Left cardiac atrium (tissue), 4 donors: ENCODE measurements at regions of chr17 and their contacts with region 1.

Region 1: GRCh38 chr17:75845049-75845860 is 1.1 kb upstream of the UNC13D start:
- DNase-seq: peak; percentile 85
- ATAC-seq: peak; percentile 68 to 74

Region 2: DNA sequence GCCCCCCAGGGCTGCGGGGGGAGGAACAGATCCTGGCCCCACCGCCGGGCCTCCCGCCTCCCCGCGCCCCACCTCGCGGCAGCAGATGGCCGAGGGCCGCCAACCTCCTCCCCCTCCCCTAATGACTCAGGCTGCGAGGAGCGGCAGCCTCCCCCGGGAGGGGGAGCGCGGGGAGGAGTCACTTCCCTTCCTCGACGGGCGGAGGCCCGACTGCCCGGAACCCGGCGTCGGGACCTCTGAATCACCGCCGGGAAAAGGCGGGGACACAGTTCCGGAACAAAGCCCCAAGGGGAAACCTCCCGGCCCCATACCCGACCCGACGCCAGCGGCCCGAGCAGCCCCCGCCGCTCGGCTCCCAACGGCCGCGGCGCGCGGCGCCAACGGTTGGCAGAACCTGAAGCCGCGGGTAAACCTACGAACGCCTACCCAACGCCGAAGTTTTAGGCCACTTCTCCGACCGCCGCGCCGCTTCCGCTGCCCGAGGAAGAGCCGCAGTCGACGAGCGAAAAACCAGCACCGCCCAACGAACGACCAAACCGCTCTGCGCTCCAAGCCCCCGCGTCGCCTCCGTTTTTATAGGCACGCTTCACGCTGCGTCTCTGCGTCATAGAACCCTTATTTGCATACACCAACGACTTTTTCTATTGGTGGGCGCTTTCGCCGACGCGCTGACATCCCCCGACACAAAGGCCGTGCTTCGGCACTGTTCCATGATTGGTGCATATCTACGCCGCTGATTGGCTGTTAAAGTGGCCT is 65.8 kb before region 1 on chr17:
- intact Hi-C with region 1: loop called in 1 of 2 experiments (anchors 10 kb)
- DNase-seq: peak; percentile 97
- ATAC-seq: peak; percentile 80 to 87

Region 3: GRCh38 chr17:75979705-75980187 is 134.5 kb after region 1 on chr17:
- intact Hi-C with region 1: no loop called
- DNase-seq: no peak
- ATAC-seq: peak; percentile 25 to 46